Right ventricle myocardium superior (tissue), 1 donor: ENCODE measurements at regions of chr17 and their contacts with region 1.

Region 1: GRCh38 chr17:27975146-27976011 is 67.1 kb upstream of the NLK start:
- DNase-seq: no peak
- ATAC-seq: no peak

Region 2: DNA sequence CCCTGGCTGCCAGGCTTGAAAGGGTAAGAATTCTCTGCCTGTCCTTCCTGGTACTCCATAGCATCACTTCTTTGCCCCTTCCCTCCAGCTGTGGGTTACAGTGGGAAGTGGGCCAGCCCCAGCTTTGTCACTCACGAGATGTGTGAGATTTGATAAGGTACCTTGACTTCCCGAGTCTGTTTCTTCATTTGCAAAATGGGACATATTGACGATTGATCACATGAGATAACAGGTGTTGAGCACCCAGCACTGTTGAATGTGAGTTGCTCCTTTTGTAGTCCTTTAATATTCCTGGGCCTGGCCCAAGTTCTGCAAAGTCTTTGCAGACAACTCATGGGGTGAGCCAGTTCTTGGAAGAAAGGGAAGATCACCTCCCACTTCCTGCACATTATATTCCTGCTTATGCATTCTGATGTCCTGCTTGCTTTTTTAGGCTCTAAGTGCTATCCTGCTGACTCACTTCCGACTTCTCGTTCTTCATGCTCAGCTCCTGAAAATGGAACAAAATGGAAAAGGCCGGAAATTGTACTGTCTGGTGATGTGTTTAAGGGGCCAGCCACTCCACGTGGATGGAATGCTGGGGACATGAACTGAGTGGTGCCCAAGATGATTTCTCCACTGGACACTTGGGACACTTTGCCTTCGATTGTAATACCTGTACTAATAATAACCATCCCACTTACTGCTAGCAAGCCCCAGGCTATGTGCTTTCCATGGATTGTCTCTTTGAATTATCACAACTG is 58.8 kb after region 1 on chr17:
- intact Hi-C with region 1: loop called (anchors 10 kb)
- DNase-seq: no peak
- ATAC-seq: peak; percentile 53